ENCODE measurements at regions of chr5 and their contacts with region 1.

Region 1: GRCh38 chr5:54540286-54540685 is 22.7 kb downstream of the SNX18 start:
- DNase-seq: no peak
- ATAC-seq: no peak
- H3K4me3 ChIP-seq: no peak overlapping the region
- H3K27ac ChIP-seq: no peak overlapping the region
- H3K4me1 ChIP-seq: no peaks in the 10 kb centered on the region
- H3K27me3 ChIP-seq: no peaks in the 10 kb centered on the region; a peak in 1 of 4 replicates
- CTCF ChIP-seq: no peak
- EP300 ChIP-seq: no peak
- POLR2A ChIP-seq: no peak
- RAD21 ChIP-seq: no peak

Region 2: DNA sequence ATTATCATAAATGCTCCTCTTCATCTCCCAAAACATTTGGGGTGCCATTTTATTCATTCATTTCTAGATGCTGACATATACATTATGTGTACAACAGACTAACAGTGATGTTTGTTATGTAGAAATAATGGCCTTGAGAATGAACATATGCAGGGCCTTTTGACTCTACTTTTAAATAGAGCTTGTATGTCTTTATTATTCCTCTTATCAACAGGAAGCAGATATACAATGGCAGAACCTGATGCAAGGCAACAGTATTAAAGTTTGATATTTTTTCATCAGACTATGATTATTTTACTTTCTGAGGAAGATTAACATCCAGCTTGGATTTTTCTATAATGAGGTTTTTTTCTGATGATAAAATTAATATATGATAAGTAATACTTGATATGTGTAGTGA is 21.4 kb after region 1 on chr5:
- CTCF ChIA-PET with region 1: no interaction called
- POLR2A ChIA-PET with region 1: no interaction called
- RAD21 ChIA-PET with region 1: no interaction called
- SMC1A ChIA-PET with region 1: interaction called, 3 read pairs
- in situ Hi-C with region 1: no loop called
- intact Hi-C with region 1: loop called (anchors 1 kb)
- DNase-seq: no peak
- ATAC-seq: no peak
- H3K4me3 ChIP-seq: no peak overlapping the region
- H3K27ac ChIP-seq: no peak overlapping the region
- H3K4me1 ChIP-seq: no peaks in the 10 kb centered on the region
- H3K27me3 ChIP-seq: no peaks in the 10 kb centered on the region
- CTCF ChIP-seq: no peak
- EP300 ChIP-seq: no peak
- POLR2A ChIP-seq: no peak
- RAD21 ChIP-seq: no peak

Region 3: DNA sequence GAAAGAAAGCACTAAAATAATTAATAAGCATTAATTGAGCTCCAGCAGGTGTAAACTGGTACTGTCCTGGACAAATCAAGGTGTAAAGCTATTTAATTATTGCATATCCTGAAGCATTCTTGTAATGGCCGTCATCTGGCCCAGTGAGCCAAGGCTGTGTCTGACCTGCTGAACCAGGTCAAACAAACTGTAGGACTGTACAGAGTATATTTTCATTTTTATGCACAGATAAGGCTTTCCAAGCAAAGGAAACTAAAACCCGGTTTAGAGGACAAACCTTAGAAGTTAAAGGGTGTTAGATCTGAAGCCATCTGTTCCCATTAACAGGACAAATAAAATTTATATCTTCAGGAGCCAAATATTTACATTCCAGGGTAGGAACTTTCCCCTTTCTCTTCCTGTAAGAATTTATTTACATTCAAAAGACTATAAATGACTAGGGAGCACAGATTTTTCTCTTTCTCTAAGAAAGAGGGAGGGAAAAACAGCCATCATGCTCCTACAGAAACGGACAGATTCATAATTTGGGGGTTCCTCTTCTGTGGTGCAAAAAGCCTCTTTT is 375.3 kb after region 1 on chr5:
- CTCF ChIA-PET with region 1: no interaction called
- POLR2A ChIA-PET with region 1: no interaction called
- RAD21 ChIA-PET with region 1: no interaction called
- SMC1A ChIA-PET with region 1: no interaction called
- in situ Hi-C with region 1: no loop called
- intact Hi-C with region 1: no loop called
- DNase-seq: no peak
- ATAC-seq: no peak
- H3K4me3 ChIP-seq: no peak overlapping the region
- H3K27ac ChIP-seq: no peak overlapping the region
- H3K4me1 ChIP-seq: no peaks in the 10 kb centered on the region
- H3K27me3 ChIP-seq: peaks cover 3 to 9% of the 10 kb centered on the region in 2 experiments; a peak in 3 of 4 replicates
- CTCF ChIP-seq: no peak
- EP300 ChIP-seq: no peak
- POLR2A ChIP-seq: no peak
- RAD21 ChIP-seq: no peak

Measured in GM12878 (cell line).